Transverse colon (tissue), 4 donors: ENCODE measurements at regions of chr10 and their contacts with region 1.

Region 1: DNA sequence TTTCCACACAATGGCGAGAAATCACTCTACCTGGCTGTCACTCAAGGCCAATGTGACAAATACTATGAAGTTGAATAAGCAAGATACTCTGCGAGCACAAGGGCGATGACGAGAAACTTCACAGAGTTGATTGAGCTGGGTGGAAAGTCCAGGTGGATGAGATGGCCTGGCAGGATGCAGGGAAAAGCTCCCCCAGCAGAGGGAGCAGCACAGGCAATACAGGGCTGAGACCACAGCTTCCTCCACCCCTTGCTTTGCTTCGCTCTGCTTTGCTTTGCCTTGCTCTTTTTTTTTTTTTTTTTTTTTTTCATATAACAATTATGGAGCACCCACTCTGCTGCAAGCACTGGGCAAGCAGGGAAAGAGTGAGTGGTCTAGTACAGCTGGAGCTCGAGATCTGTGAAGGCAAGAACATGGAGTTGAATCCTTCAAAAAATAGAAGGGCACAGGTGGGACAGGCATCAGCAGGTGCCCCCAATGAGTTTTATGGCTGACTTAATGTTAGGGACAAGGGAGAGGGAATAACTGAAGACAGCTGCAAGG is 88.3 kb downstream of the CABCOCO1 start:
- DNase-seq: peak; percentile 88
- H3K4me3 ChIP-seq: no peak overlapping the region
- H3K27ac ChIP-seq: peak overlapping the region; percentile 45 to 66 (median 64)
- H3K4me1 ChIP-seq: peaks cover 14 to 26% (median 19%) of the 10 kb centered on the region in 4 donors
- H3K27me3 ChIP-seq: no peaks in the 10 kb centered on the region
- CTCF ChIP-seq: peak; percentile 65 to 84 (median 72)
- EP300 ChIP-seq: no peak
- POLR2A ChIP-seq: no peak

Region 2: DNA sequence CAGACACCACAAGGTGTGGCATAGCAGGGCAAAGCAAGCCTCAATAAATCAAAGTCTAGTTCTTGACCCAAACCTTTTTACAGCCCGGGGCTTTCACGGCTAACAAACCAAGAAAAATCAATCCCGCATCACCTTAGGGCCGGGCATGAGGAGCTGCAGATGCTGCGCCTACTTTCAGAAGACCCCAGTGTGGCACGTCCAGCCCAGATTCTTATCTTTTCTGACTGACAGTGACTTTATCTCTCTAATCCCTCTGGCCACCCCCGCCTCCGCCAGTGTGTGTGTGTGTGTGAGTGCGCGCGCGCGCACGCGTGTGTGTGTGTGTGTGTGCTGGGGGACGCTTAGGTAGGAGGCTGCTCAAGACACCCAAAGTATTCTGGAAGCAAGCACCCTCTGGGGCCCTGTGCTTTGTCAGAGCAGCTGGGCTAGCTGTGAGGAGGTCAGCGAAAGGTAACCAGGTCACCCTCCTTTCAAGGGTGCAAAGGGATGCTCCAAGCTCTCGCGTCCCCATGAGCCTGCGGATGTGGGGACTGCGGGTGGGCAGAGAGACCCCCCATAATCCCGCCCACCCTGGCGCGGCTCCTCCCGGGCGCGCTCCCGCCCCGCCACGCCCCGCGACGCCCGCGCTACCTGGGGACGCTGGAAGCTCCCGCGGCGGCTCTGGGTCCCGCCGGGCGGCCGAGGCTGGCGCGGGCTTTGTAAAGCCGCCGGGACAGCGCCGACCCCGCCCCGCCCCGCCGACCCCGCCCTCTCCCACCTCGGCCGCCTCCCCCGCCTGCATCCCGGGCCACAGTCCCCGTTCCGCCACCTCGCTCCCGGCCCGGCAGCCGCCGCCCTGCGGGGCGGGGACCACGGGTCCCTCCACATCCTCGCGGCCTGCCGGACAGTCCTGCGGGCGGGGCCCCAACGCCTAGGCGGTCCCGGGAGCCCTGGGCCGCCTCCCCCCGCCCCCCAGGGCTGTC is 750.0 kb before region 1 on chr10:
- in situ Hi-C with region 1: no loop called
- intact Hi-C with region 1: loop called (anchors 5 kb)
- DNase-seq: peak; percentile 29
- H3K4me3 ChIP-seq: peak overlapping the region; percentile 31 to 48 (median 44)
- H3K27ac ChIP-seq: peak overlapping the region in 1 of 4 donors; percentile 34
- H3K4me1 ChIP-seq: peaks cover 0 to 21% (median 10%) of the 10 kb centered on the region in 4 donors
- H3K27me3 ChIP-seq: peaks cover 15% of the 10 kb centered on the region
- CTCF ChIP-seq: no peak
- EP300 ChIP-seq: no peak
- POLR2A ChIP-seq: no peak